Activated B cell treated with CpG ODN at 0.5 μM for 24 hours (primary cell): ENCODE measurements at regions of chr5 and their contacts with region 1.

Region 1: GRCh38 chr5:59562756-59563389 is 330.7 kb downstream of the PDE4D start:
- DNase-seq: peak; percentile 60
- ATAC-seq: peak; percentile 91
- H3K4me3 Mint-ChIP-seq: peak overlapping the region; percentile 65
- H3K27ac Mint-ChIP-seq: peak overlapping the region; percentile 91
- H3K4me1 Mint-ChIP-seq: peaks cover 81% of the 10 kb centered on the region
- H3K27me3 Mint-ChIP-seq: no peaks in the 10 kb centered on the region
- CTCF ChIP-seq: no peak

Region 2: DNA sequence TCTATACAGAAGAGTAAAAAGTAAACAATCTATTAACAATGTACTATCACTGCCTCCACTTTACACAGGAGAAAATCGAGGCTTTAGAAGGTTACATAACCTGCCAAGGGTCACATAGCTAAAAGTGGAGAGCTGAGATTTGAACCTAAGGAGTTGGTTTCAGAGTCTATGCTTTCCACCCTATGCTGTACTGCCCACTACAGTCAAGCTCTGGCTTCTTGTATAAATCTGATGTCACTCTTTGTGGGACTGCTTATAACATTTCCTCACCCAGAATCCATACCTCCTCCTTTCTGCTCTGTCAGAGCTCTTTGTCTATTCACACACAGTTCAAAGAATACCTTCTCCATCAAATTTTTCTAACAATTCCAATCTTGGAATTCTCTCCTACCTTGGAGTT is 476.8 kb before region 1 on chr5:
- CTCF ChIA-PET with region 1: no interaction called
- POLR2A ChIA-PET with region 1: no interaction called
- intact Hi-C with region 1: no loop called
- DNase-seq: no peak
- ATAC-seq: no peak
- H3K4me3 Mint-ChIP-seq: no peak overlapping the region
- H3K27ac Mint-ChIP-seq: no peak overlapping the region
- H3K4me1 Mint-ChIP-seq: no peaks in the 10 kb centered on the region
- H3K27me3 Mint-ChIP-seq: no peaks in the 10 kb centered on the region
- CTCF ChIP-seq: no peak

Region 3: GRCh38 chr5:59126708-59127573 is 435.9 kb before region 1 on chr5:
- CTCF ChIA-PET with region 1: no interaction called
- POLR2A ChIA-PET with region 1: no interaction called
- intact Hi-C with region 1: loop called (anchors 5 kb)
- DNase-seq: no peak
- ATAC-seq: no peak
- H3K4me3 Mint-ChIP-seq: no peak overlapping the region
- H3K27ac Mint-ChIP-seq: no peak overlapping the region
- H3K4me1 Mint-ChIP-seq: peaks cover 7% of the 10 kb centered on the region
- H3K27me3 Mint-ChIP-seq: no peaks in the 10 kb centered on the region
- CTCF ChIP-seq: no peak

Region 4: DNA sequence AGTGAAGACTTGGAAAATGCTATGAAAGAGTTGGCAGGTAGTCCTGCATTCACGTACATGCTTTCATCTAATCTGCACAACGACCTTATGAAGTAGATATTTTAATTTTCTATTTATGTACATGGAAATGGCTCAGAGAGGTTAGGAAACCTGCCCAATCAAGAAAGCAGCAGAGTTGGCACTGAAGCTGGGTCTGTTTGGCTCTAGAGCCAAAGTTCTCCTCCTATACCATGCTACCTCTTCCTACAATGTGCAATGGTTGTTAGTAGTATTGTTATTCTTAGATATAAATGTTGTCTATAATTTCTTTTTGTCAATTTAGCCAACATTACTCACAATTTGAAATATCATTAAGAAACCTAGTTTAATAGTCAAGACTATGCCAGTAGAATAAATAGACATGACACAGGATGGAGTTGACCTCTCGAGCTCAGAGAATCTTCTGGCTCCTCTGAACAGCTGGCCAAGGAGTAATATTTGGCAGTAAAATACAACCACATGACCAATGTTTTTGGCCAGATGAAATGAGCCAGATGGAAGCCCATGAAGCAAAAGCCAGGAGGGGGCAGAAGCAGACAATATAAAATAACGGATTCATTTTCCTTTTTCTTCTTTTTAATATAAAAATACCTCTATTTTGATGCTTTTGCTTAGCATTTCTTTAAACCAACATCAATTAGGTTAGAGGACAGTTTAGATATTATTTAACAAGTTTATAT is 211.6 kb before region 1 on chr5:
- CTCF ChIA-PET with region 1: no interaction called
- POLR2A ChIA-PET with region 1: no interaction called
- intact Hi-C with region 1: no loop called
- DNase-seq: no peak
- ATAC-seq: no peak
- H3K4me3 Mint-ChIP-seq: no peak overlapping the region
- H3K27ac Mint-ChIP-seq: no peak overlapping the region
- H3K4me1 Mint-ChIP-seq: no peaks in the 10 kb centered on the region
- H3K27me3 Mint-ChIP-seq: no peaks in the 10 kb centered on the region
- CTCF ChIP-seq: no peak

Region 5: GRCh38 chr5:59506285-59506877 is 56.5 kb before region 1 on chr5:
- CTCF ChIA-PET with region 1: interaction called, 3 read pairs
- POLR2A ChIA-PET with region 1: no interaction called
- intact Hi-C with region 1: loop called (anchors 2 kb)
- DNase-seq: no peak
- ATAC-seq: no peak
- H3K4me3 Mint-ChIP-seq: no peak overlapping the region
- H3K27ac Mint-ChIP-seq: no peak overlapping the region
- H3K4me1 Mint-ChIP-seq: no peaks in the 10 kb centered on the region
- H3K27me3 Mint-ChIP-seq: no peaks in the 10 kb centered on the region
- CTCF ChIP-seq: no peak

Region 6: DNA sequence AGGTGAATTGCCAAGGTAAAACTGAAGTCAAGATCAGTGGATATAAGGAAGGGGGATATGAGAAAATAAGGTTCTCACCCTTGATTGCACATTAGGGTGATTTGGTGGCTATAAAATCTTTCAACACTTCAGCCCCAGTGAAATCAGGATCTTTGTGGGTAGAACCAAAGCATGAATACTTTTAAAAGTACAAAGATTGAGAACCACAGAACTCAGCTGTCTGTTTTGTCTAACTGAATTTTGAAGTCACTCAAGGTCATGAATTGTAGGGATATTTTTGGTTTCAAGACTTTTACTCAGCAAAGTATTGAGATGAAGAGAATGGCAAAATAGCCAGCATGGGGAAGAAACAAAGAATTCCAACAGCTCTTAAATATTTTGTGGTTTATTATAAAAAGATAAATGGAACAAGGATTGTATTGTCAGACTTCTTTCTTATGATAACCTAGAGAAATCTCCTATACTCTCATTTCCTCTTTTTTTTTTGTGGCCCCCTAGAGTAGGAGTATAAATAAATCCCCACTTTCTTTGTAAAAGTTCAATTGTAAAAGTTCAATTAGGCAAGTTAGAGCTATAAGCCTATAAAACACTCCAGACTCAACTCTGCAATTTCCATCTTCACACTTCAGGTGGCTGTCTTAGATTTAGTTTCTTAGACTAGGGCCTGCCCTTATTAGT is 57.8 kb after region 1 on chr5:
- CTCF ChIA-PET with region 1: no interaction called
- POLR2A ChIA-PET with region 1: no interaction called
- intact Hi-C with region 1: no loop called
- DNase-seq: no peak
- ATAC-seq: peak; percentile 37
- H3K4me3 Mint-ChIP-seq: no peak overlapping the region
- H3K27ac Mint-ChIP-seq: peak overlapping the region; percentile 14
- H3K4me1 Mint-ChIP-seq: peaks cover 24% of the 10 kb centered on the region
- H3K27me3 Mint-ChIP-seq: no peaks in the 10 kb centered on the region
- CTCF ChIP-seq: no peak

Region 7: DNA sequence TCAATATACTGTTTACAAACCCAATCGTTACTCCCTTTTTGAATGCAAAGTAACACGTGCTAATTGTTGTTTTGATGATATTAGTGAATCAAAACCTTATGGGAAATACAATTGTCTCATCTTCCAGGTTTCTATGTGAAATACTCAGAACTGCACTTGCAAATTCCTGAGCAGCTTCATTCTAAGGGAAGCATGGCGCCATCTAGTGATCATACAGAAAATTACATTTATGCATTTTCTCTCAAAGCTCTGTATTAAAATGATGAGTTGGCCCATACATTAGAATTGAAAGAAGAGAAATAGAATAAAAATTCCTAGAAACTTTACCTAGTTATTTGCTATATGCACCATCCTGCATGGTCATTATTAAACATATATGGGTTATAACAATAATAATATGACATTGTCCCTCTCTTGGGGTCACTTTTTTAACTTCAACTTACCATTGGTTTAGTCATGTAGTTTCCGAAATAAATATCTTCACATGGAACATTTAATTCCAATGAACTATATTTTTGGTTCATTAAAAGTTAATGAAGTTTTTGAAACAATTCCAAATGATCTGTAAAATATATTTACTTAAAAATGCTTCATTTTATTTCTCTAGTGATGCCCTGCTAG is 110.7 kb after region 1 on chr5:
- CTCF ChIA-PET with region 1: no interaction called
- POLR2A ChIA-PET with region 1: no interaction called
- intact Hi-C with region 1: loop called (anchors 2 kb)
- DNase-seq: no peak
- ATAC-seq: peak; percentile 28
- H3K4me3 Mint-ChIP-seq: no peak overlapping the region
- H3K27ac Mint-ChIP-seq: no peak overlapping the region
- H3K4me1 Mint-ChIP-seq: peaks cover 10% of the 10 kb centered on the region
- H3K27me3 Mint-ChIP-seq: no peaks in the 10 kb centered on the region
- CTCF ChIP-seq: peak; percentile 75

Region 8: GRCh38 chr5:60540856-60541805 is 978.3 kb after region 1 on chr5:
- CTCF ChIA-PET with region 1: no interaction called
- POLR2A ChIA-PET with region 1: no interaction called
- intact Hi-C with region 1: loop called (anchors 10 kb)
- DNase-seq: no peak
- ATAC-seq: peak; percentile 87
- H3K4me3 Mint-ChIP-seq: peak overlapping the region; percentile 60
- H3K27ac Mint-ChIP-seq: peak overlapping the region; percentile 70
- H3K4me1 Mint-ChIP-seq: peaks cover 61% of the 10 kb centered on the region
- H3K27me3 Mint-ChIP-seq: no peaks in the 10 kb centered on the region
- CTCF ChIP-seq: no peak